Heart right ventricle (tissue), 16 donors: ENCODE measurements at regions of chr10 and their contacts with region 1.

Region 1: DNA sequence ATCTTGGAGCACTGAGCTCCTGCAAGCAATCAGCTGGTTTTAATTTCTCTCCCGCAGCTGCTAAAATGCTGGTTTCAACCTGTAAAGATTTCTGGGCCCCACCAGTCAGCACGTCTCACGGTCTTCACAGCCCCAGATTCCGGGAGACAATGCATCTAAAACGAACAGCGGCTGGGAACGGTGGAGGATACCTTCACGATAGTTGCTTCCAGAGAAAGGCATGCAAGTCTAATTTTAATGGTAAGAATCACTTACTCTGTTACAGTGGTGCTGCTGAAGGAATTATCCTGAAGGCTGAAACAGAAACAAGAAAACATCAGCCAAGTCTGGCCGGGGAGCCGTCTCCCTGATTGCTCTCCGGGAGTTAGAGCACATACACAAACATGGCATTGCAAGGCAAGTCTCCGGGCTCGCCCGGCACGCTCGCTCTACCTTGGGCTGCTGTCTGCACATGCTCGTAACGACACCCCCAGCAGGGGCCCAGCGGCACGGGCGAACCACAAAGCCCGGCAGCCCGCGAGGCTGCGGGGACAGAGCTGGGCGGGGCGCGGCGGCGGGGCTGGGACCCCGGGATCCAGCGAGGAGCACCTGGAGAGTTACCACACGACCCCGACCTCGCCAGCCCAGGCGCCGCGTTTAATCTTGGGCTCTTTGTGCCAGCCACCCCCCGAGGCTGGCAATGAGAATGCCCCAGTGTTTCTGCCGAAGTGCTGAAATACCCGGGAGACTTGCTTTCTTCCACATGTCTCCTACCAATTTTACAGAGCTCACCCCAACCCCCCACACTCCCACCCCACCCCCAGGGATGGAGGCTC is at the start of gene FAM13C:
- DNase-seq: peak; percentile 64 to 71
- ATAC-seq: peak; percentile 68 to 91 (median 79)
- H3K4me3 ChIP-seq: peak within 1 kb of the TSS; percentile 36 to 77 (median 65)
- H3K27ac ChIP-seq: peak within 1 kb of the TSS; percentile 79 to 94 (median 87)
- H3K4me1 ChIP-seq: peaks cover 3 to 75% (median 36%) of the 10 kb centered on the region in 9 donors
- H3K27me3 ChIP-seq: peaks cover 0 to 7% (median 0%) of the 10 kb centered on the region in 7 donors
- CTCF ChIP-seq: peak in 1 of 9 donors; percentile 6
- total RNA-seq, gene FAM13C: 2.9 to 14.6 (median 7.7) TPM

Region 2: DNA sequence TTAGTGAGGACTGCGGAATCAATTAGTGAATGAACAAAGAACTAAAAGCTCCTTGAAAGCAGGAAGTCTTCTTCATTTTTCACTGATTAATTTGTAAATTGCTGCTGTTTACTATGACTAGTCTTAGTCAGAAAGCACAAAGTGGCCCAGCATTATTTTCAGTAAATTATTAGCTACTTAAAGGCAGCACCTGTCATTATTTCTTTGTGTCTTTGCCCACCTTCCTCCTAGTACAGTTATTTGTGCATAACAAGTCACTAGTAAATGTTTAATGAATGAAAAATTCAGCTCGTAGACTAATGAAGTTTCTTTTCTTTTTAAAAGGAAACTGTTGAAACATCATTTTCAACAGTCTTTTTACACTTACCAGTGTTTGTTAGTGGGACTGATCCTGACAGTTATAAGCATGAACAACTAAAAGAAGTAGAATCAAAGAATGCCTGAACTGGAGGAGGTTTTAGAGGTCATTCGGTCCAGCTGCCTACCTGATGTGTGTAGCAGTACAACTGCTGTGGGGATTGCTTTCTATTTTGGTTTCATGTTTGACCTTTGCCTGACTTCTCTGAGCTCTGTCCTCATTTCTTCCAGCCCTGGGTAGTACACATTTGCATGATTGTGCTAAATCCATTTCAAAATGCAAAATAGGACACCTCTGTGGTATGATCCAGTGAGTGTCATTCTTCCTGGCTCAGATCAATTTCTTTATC is 325.9 kb before region 1 on chr10:
- intact Hi-C with region 1: no loop called
- DNase-seq: no peak
- ATAC-seq: peak in 3 of 8 donors; percentile 37 to 51 (median 45)
- H3K4me3 ChIP-seq: no peak overlapping the region
- H3K27ac ChIP-seq: no peak overlapping the region
- H3K4me1 ChIP-seq: peaks cover 0 to 11% (median 0%) of the 10 kb centered on the region in 9 donors
- H3K27me3 ChIP-seq: no peaks in the 10 kb centered on the region
- CTCF ChIP-seq: no peak

Region 3: GRCh38 chr10:59240582-59241183 is 121.7 kb before region 1 on chr10:
- intact Hi-C with region 1: loop called in 2 of 10 experiments (anchors 5 to 10 kb)
- DNase-seq: peak in 1 of 2 donors; percentile 21
- ATAC-seq: no peak
- H3K4me3 ChIP-seq: no peak overlapping the region
- H3K27ac ChIP-seq: no peak overlapping the region
- H3K4me1 ChIP-seq: peaks cover 0 to 4% (median 0%) of the 10 kb centered on the region in 9 donors
- H3K27me3 ChIP-seq: no peaks in the 10 kb centered on the region
- CTCF ChIP-seq: peak; percentile 48 to 84 (median 65)

Region 4: GRCh38 chr10:59315465-59315864 is 46.9 kb before region 1 on chr10:
- intact Hi-C with region 1: loop called in 4 of 10 experiments (anchors 2 to 5 kb)
- DNase-seq: peak in 1 of 2 donors; percentile 43
- ATAC-seq: peak in 7 of 8 donors; percentile 41 to 88 (median 75)
- H3K4me3 ChIP-seq: no peak overlapping the region
- H3K27ac ChIP-seq: peak overlapping the region in 5 of 10 donors; percentile 25 to 78 (median 56)
- H3K4me1 ChIP-seq: peaks cover 0 to 80% (median 42%) of the 10 kb centered on the region in 9 donors
- H3K27me3 ChIP-seq: no peaks in the 10 kb centered on the region
- CTCF ChIP-seq: no peak

Region 5: GRCh38 chr10:59465088-59465487 is 102.7 kb after region 1 on chr10:
- intact Hi-C with region 1: loop called in 1 of 10 experiments (anchors 5 kb)
- DNase-seq: peak in 1 of 2 donors; percentile 19
- ATAC-seq: peak in 2 of 8 donors; percentile 38 to 42
- H3K4me3 ChIP-seq: no peak overlapping the region
- H3K27ac ChIP-seq: no peak overlapping the region
- H3K4me1 ChIP-seq: peaks cover 0 to 8% (median 0%) of the 10 kb centered on the region in 9 donors
- H3K27me3 ChIP-seq: no peaks in the 10 kb centered on the region
- CTCF ChIP-seq: peak in 8 of 9 donors; percentile 12 to 63 (median 48)

Region 6: GRCh38 chr10:59536167-59536930 is 174.0 kb after region 1 on chr10:
- intact Hi-C with region 1: loop called in 2 of 10 experiments (anchors 10 kb)
- DNase-seq: peak; percentile 14 to 60
- ATAC-seq: peak; percentile 71 to 97 (median 96)
- H3K4me3 ChIP-seq: no peak overlapping the region
- H3K27ac ChIP-seq: peak overlapping the region; percentile 38 to 84 (median 76)
- H3K4me1 ChIP-seq: peaks cover 0 to 28% (median 16%) of the 10 kb centered on the region in 9 donors
- H3K27me3 ChIP-seq: no peaks in the 10 kb centered on the region
- CTCF ChIP-seq: no peak